Thyroid gland (tissue), 4 donors: ENCODE measurements at regions of chr10 and their contacts with region 1.

Region 1: GRCh38 chr10:79068562-79069324 is at the start of gene ZMIZ1:
- DNase-seq: peak; percentile 92 to 93
- H3K4me3 ChIP-seq: peak within 1 kb of the TSS; percentile 64 to 95 (median 89)
- H3K27ac ChIP-seq: peak within 1 kb of the TSS; percentile 98 to 99 (median 99)
- H3K4me1 ChIP-seq: peaks cover 38 to 39% of the 10 kb centered on the region in 2 donors
- H3K27me3 ChIP-seq: no peaks in the 10 kb centered on the region
- CTCF ChIP-seq: peak in 2 of 6 experiments; percentile 6 to 38
- POLR2A ChIP-seq: peak in 1 of 2 donors; percentile 95
- total RNA-seq, gene ZMIZ1: 59.9 to 128 (median 94.4) TPM

Region 2: DNA sequence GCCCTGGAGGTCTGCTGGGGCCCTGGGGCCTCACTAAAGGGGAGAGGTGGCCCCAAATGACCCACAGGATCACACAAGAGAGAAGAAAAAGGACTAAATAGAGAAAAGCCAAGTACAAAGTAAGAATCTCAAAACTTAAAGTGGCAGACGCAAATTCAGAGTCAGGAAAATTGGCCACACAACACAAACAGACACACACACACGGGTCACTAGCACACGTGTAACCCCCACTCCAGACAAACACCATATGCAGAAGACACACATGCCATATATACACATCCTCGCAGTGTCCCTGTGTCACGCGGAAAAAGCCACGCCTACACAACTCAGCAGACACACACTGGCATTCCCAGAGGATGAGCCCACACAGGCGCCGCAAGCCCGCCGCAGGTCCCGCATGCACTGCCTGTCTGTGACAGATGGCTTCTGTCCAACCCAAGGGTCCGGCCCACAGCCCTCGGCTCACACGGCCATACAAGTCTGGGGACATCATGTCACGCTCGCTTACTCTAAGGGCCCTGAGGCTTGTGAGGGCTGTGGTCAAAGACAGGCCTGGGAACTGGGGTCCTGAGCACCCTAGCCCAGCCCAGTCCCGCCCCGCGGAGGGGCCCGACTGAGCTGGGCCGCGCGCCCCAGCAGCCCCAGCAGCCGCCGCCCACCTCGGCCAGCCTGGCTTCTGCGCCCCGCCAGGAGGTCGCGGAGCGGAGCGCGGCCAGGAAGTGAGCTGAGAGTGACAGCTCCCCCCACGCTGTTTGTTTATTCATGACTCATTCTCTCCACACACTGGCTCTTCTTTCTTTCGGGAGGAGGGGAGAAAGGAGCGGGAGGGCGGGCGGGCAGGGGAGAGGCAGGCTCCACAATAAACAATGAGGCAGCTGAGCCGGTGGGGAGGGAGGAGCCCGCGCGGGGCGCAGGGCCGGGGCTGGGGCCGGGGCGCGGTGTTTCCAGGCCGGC is 95.5 kb before region 1 on chr10:
- intact Hi-C with region 1: loop called (anchors 5 kb)
- DNase-seq: peak; percentile 79 to 82
- H3K4me3 ChIP-seq: peak overlapping the region in 1 of 3 donors; percentile 31
- H3K27ac ChIP-seq: peak overlapping the region; percentile 99
- H3K4me1 ChIP-seq: peaks cover 44 to 57% of the 10 kb centered on the region in 2 donors
- H3K27me3 ChIP-seq: no peaks in the 10 kb centered on the region
- CTCF ChIP-seq: peak in 1 of 6 experiments; percentile 9
- POLR2A ChIP-seq: peak in 1 of 2 donors; percentile 74

Region 3: GRCh38 chr10:79137826-79138225 is 69.1 kb after region 1 on chr10:
- intact Hi-C with region 1: loop called (anchors 10 kb)
- DNase-seq: no peak
- H3K4me3 ChIP-seq: no peak overlapping the region
- H3K27ac ChIP-seq: peak overlapping the region; percentile 51 to 79 (median 66)
- H3K4me1 ChIP-seq: peaks cover 50 to 68% of the 10 kb centered on the region in 2 donors
- H3K27me3 ChIP-seq: no peaks in the 10 kb centered on the region
- CTCF ChIP-seq: no peak
- POLR2A ChIP-seq: no peak